Activated naive CD4-positive, alpha-beta T cell treated with anti-CD3 and anti-CD28 coated beads for 36 hours (primary cell): ENCODE measurements at regions of chr3 and their contacts with region 1.

Region 1: GRCh38 chr3:18507333-18507732 is 82.2 kb upstream of the SATB1 start:
- DNase-seq: no peak
- H3K4me3 Mint-ChIP-seq: no peak overlapping the region
- H3K27ac Mint-ChIP-seq: no peak overlapping the region
- H3K4me1 Mint-ChIP-seq: peaks cover 17% of the 10 kb centered on the region
- H3K27me3 Mint-ChIP-seq: no peaks in the 10 kb centered on the region

Region 2: GRCh38 chr3:18438586-18438985 is 68.7 kb before region 1 on chr3:
- CTCF ChIA-PET with region 1: no interaction called
- intact Hi-C with region 1: no loop called
- DNase-seq: peak; percentile 83
- H3K4me3 Mint-ChIP-seq: peak overlapping the region; percentile 76
- H3K27ac Mint-ChIP-seq: peak overlapping the region; percentile 90
- H3K4me1 Mint-ChIP-seq: peaks cover 30% of the 10 kb centered on the region
- H3K27me3 Mint-ChIP-seq: no peaks in the 10 kb centered on the region

Region 3: GRCh38 chr3:18527691-18528090 is 20.4 kb after region 1 on chr3:
- CTCF ChIA-PET with region 1: no interaction called
- intact Hi-C with region 1: loop called (anchors 2 kb)
- DNase-seq: no peak
- H3K4me3 Mint-ChIP-seq: no peak overlapping the region
- H3K27ac Mint-ChIP-seq: no peak overlapping the region
- H3K4me1 Mint-ChIP-seq: peaks cover 2% of the 10 kb centered on the region
- H3K27me3 Mint-ChIP-seq: no peaks in the 10 kb centered on the region

Region 4: DNA sequence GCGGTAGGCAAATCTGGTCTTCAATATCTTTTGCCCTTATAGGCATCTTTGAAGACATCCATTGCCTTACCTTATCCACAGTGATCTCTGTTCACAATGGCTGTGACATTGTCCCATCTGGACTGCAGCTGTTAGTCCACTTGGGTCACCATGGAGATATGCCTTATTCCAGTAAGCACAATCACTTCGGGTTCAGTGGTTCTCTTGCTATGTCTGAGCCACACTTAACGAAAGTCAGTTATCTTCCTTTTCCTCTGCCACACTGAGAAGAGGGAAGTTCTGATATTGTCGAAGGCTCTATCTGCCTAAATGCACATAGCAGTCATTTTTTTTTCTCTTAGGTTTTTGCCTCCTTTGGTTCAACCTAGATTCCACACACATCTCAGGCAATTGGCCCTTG is 36.8 kb after region 1 on chr3:
- CTCF ChIA-PET with region 1: no interaction called
- intact Hi-C with region 1: no loop called
- DNase-seq: no peak
- H3K4me3 Mint-ChIP-seq: no peak overlapping the region
- H3K27ac Mint-ChIP-seq: no peak overlapping the region
- H3K4me1 Mint-ChIP-seq: no peaks in the 10 kb centered on the region
- H3K27me3 Mint-ChIP-seq: no peaks in the 10 kb centered on the region